Common myeloid progenitor, CD34-positive (primary cell): ENCODE measurements at regions of chr9 and their contacts with region 1.

Region 1: DNA sequence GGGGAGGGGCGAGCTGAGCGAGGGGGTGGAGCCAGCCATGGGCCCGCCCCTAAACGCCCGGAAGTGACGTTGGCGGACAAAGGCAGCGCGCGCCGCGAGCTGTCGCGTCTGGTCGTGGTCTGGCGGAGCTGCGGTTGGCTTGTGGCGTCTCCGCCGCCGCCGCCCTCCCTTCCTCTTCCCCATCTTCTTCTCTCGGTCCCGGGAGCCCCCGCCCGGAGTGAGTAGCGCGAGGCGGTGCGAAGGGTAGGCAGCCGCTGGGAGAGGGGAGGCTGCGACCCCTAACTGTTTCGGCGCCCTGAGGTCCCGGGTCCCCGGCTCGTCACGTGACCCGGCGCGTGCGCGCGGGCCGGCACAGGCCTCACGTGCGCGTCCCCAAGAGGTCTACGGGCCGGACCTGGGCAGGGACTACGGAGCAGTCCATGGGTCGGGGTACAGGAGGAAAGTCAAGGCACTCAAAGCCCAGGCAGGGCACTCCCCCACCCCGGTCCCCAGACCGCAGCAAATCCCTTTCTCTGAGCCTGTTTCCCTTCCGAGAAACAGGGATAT is at the start of gene NTMT1:
- DNase-seq: peak; percentile 87 to 94 (median 93)
- H3K4me3 ChIP-seq: peak within 1 kb of the TSS; percentile 66 to 89 (median 84)
- H3K27ac ChIP-seq: peak within 1 kb of the TSS; percentile 61 to 81
- H3K4me1 ChIP-seq: peaks cover 19 to 45% (median 35%) of the 10 kb centered on the region in 4 experiments
- H3K27me3 ChIP-seq: no peaks in the 10 kb centered on the region

Region 2: GRCh38 chr9:129166623-129167557 is 459.3 kb before region 1 on chr9:
- CTCF ChIA-PET with region 1: interaction called, 23 read pairs
- POLR2A ChIA-PET with region 1: interaction called, 10 read pairs
- DNase-seq: peak; percentile 58 to 67 (median 59)
- H3K4me3 ChIP-seq: peak overlapping the region in 5 of 7 experiments; percentile 42 to 63 (median 51)
- H3K27ac ChIP-seq: peak overlapping the region; percentile 54 to 69
- H3K4me1 ChIP-seq: peaks cover 4 to 58% (median 37%) of the 10 kb centered on the region in 4 experiments
- H3K27me3 ChIP-seq: no peaks in the 10 kb centered on the region

Region 3: DNA sequence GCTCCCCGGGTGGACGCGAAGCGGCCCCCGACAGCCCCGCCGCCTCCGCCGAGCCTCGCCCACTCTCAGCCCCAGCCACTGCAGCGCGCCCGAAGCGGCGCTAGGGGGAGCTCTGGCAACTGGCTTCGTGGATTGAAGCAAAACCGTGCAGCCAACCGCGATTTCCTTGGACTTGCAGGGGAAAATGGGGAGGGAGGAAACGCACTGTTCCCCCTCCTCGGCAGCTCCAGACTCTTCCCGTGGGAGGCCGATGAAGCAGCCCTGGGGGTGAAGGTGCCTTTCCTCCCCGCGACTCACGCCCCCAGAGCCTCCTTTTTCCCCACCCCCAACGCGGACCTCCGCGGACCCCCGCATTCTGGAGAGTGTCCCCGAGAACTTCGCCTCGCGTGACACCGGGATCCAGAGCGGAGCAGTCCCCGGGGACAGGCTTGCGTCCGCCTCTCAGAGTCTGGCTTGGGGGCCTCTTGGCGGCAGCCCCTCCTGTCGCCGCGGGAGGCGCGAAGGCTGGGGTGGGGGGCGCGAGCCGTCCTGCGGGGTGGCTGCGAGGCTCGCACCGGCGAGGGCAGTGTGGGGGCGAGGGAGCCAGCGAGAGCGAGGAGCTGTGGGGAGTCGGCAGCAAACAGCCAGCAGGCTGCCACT is 451.9 kb before region 1 on chr9:
- CTCF ChIA-PET with region 1: interaction called, 23 read pairs
- POLR2A ChIA-PET with region 1: interaction called, 9 read pairs
- DNase-seq: peak; percentile 74 to 82 (median 80)
- H3K4me3 ChIP-seq: peak overlapping the region; percentile 61 to 89 (median 78)
- H3K27ac ChIP-seq: peak overlapping the region in 1 of 2 experiments; percentile 81
- H3K4me1 ChIP-seq: peaks cover 2 to 61% (median 45%) of the 10 kb centered on the region in 4 experiments
- H3K27me3 ChIP-seq: no peaks in the 10 kb centered on the region

Region 4: DNA sequence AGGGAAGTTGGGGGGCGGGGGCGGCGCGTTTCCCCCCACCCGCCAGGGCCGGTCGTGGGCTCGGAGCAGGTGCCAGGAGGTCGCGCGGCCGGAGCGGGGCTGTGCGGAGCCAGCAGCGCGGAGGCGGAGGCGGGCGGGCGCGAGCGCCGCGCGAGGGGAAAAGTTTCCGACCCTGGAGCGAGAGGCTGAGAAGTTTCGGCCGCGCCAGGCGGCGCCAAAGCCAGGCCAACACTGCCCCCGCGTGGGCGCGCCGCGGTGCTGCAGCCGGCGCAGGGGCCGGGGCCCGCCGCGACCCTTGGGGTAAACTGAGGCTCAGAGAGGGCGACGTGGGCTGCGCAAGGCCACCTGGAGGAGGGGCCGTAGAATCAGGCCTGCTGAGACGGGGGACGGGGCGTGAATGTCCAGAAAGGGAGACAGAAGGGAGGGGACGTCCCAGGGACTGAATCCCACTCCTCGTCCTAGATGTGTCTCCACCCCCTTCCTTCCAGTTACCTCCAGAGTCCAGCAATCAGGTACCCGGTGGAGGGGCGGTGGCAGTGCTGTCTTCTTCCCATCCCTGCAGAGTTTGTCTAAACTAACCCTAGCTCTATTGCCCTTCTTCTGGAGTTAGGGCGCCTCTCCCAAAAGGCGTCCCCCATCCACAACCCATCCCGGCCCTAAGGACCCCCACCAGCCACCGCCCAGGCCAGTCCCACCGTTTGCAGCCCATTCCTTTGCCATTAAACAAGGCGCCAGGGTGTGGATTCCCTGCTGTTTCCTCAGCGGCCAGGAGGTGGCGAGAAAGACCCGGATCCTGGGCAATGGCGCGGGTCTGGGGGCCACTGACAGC is 15.5 kb before region 1 on chr9:
- CTCF ChIA-PET with region 1: interaction called, 76 read pairs
- POLR2A ChIA-PET with region 1: interaction called, 4 read pairs
- DNase-seq: peak; percentile 60 to 76 (median 72)
- H3K4me3 ChIP-seq: peak overlapping the region; percentile 48 to 75 (median 66)
- H3K27ac ChIP-seq: peak overlapping the region in 1 of 2 experiments; percentile 34
- H3K4me1 ChIP-seq: peaks cover 0 to 54% (median 50%) of the 10 kb centered on the region in 4 experiments
- H3K27me3 ChIP-seq: no peaks in the 10 kb centered on the region

Region 5: GRCh38 chr9:129641746-129642513 is 15.8 kb after region 1 on chr9 and contains the start of gene ASB6:
- CTCF ChIA-PET with region 1: interaction called, 38 read pairs
- POLR2A ChIA-PET with region 1: interaction called, 4 read pairs
- DNase-seq: peak; percentile 95 to 98 (median 98)
- H3K4me3 ChIP-seq: peak within 1 kb of the TSS; percentile 80 to 97 (median 87)
- H3K27ac ChIP-seq: peak within 1 kb of the TSS; percentile 33 to 71
- H3K4me1 ChIP-seq: peaks cover 4 to 32% (median 27%) of the 10 kb centered on the region in 4 experiments
- H3K27me3 ChIP-seq: no peaks in the 10 kb centered on the region

Region 6: DNA sequence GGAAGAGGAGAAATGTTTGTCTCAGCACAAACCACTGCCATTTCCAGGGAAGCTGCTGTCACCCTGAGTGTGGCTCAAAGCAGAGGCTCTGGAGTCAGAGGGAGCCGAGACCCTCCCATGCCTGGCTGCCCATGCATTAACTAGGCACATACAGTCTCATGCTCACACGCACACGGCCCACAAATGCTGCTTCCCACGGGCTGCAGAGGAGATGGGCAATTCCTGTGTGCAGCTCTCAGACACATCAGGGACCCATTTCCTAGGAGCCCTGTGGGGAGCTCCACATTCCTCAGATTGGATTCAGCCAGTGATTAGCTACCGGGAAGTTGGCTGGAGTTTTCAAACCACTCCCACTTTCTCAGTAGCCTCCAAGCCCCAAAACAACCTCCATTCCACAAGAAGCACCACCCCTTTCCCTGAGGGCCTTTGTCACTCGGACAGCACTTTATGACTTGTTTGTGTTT is 135.8 kb after region 1 on chr9:
- CTCF ChIA-PET with region 1: no interaction called
- POLR2A ChIA-PET with region 1: no interaction called
- DNase-seq: no peak
- H3K4me3 ChIP-seq: no peak overlapping the region
- H3K27ac ChIP-seq: no peak overlapping the region
- H3K4me1 ChIP-seq: peaks cover 0 to 9% (median 5%) of the 10 kb centered on the region in 4 experiments
- H3K27me3 ChIP-seq: no peaks in the 10 kb centered on the region